ENCODE measurements at regions of chr17 and their contacts with region 1.

Region 1: GRCh38 chr17:42997984-42998938 is at the start of gene RPL27:
- DNase-seq: peak; percentile 99
- ATAC-seq: peak; percentile 97
- H3K4me3 Mint-ChIP-seq: peak within 1 kb of the TSS; percentile 96
- H3K27ac Mint-ChIP-seq: peak within 1 kb of the TSS; percentile 99
- H3K4me1 Mint-ChIP-seq: peaks cover 25% of the 10 kb centered on the region
- H3K27me3 Mint-ChIP-seq: no peaks in the 10 kb centered on the region
- CTCF ChIP-seq: peak; percentile 85
- total RNA-seq, gene RPL27: 1,640 to 1,647 TPM

Region 2: DNA sequence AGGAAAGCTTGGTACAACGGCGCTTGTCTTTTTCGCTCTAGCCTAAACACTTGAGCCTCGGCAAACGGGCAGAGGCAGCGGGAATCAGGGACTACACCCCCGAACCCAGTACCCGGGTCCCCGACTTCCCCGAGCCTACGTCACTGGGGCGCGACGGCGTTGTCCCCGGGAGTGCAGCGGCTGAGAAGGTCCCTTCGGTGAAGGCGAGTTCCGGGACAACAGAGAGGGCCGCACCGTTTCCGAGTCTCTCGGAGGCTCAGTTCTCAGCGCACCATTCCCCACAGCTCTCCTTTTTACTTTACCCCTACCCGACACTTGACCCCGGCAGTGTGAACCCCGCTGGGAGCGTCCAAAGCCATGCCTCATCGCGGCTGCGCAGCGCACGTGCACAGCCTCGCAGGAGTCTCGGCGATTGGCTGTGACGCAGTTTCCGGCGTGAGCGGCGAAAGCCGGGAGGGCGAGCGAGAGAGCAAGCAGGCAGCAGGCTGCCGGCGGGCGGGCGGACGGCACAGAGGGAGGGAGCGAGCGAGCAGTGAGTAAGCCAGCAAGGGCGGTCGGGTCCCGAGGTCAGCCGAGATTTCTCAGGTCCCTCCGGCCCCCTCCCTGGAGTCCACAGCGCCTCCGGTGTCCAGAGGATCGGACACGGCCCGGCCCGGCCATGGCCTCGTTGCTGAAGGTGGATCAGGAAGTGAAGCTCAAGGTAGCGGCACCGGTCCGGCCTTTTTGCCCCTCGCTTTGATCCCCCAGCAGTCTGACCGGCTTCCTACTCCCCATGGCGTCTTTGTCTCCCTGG is 165.1 kb before region 1 on chr17 and contains the start of gene PSME3:
- CTCF ChIA-PET with region 1: interaction called, 10 read pairs
- POLR2A ChIA-PET with region 1: interaction called, 9 read pairs
- intact Hi-C with region 1: no loop called
- DNase-seq: peak; percentile 92
- ATAC-seq: peak; percentile 89
- H3K4me3 Mint-ChIP-seq: peak within 1 kb of the TSS; percentile 94
- H3K27ac Mint-ChIP-seq: peak within 1 kb of the TSS; percentile 99
- H3K4me1 Mint-ChIP-seq: peaks cover 19% of the 10 kb centered on the region
- H3K27me3 Mint-ChIP-seq: no peaks in the 10 kb centered on the region
- CTCF ChIP-seq: no peak
- total RNA-seq, gene PSME3: 124 to 132 TPM

Region 3: DNA sequence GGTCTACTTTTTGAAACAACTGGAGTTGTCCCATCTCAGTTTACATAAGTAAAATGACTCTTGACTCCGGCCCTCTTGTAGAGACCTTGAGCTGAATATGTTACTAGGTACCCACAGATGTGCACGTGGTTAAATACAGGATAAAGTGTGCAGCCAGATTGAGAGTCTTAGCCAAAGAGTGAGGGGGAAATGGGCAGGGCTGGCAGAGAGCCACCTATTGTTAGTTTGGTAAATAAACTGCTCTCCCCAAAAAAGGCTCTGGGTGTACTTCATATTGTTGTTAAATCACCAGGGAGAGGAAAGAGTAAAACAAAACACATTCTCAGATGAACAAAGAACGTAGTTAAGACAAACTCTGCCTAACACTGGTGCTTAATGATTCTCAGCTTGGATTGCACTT is 77.3 kb before region 1 on chr17:
- CTCF ChIA-PET with region 1: no interaction called
- POLR2A ChIA-PET with region 1: no interaction called
- intact Hi-C with region 1: no loop called
- DNase-seq: no peak
- ATAC-seq: no peak
- H3K4me3 Mint-ChIP-seq: no peak overlapping the region
- H3K27ac Mint-ChIP-seq: no peak overlapping the region
- H3K4me1 Mint-ChIP-seq: no peaks in the 10 kb centered on the region
- H3K27me3 Mint-ChIP-seq: peaks cover 4% of the 10 kb centered on the region
- CTCF ChIP-seq: no peak

Region 4: GRCh38 chr17:42964161-42964932 is 33.9 kb before region 1 on chr17 and contains the start of gene AARSD1:
- CTCF ChIA-PET with region 1: interaction called, 4 read pairs
- POLR2A ChIA-PET with region 1: interaction called, 13 read pairs
- intact Hi-C with region 1: no loop called
- DNase-seq: peak; percentile 95
- ATAC-seq: peak; percentile 98
- H3K4me3 Mint-ChIP-seq: peak within 1 kb of the TSS; percentile 88
- H3K27ac Mint-ChIP-seq: peak within 1 kb of the TSS; percentile 95
- H3K4me1 Mint-ChIP-seq: peaks cover 17% of the 10 kb centered on the region
- H3K27me3 Mint-ChIP-seq: no peaks in the 10 kb centered on the region
- CTCF ChIP-seq: no peak
- total RNA-seq, gene AARSD1: 54.3 to 57.5 TPM

Region 5: DNA sequence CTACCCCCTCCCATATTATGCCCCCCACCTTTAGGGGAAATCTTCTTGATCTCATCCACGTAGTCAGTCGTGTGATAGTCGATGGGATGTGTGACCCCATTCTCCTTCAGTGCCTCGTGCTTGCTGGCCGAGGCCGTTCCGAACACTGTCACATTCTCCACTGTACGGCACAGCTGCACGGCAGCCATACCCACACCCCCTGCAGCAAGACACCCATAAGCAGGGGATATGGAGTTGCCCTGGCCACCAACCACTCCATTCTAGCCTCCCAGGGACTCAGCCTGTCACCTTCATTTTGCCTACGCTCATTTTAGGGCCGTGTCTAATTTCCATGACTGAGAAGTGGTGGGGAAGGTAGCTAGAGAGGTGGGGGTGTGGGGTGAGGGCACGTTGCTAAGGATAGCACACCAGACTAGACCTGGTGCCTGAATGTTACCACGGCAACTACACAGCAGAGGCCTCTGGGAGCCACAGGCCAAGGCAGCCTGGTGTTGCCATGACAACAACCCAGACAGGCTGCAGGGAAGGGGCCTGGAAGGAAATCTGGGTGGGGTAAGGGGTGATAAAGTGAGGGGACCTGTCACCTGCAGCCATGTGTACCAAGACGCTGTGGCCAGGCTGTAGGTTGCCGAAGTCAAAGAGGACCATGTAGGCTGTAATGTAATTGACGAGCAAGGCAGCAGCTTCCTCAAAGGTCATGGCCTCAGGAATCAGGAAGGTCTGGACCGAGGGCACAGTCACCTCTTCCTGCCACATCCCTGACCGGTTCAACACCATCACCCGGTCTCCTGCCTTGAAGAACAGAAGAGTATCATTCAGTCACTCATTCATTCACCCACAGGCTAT is 20.0 kb after region 1 on chr17:
- CTCF ChIA-PET with region 1: interaction called, 5 read pairs
- POLR2A ChIA-PET with region 1: interaction called, 36 read pairs
- intact Hi-C with region 1: no loop called
- DNase-seq: no peak
- ATAC-seq: peak; percentile 15
- H3K4me3 Mint-ChIP-seq: no peak overlapping the region
- H3K27ac Mint-ChIP-seq: no peak overlapping the region
- H3K4me1 Mint-ChIP-seq: peaks cover 31% of the 10 kb centered on the region
- H3K27me3 Mint-ChIP-seq: no peaks in the 10 kb centered on the region
- CTCF ChIP-seq: no peak

Region 6: GRCh38 chr17:43360739-43361505 is 362.7 kb after region 1 on chr17:
- CTCF ChIA-PET with region 1: no interaction called
- POLR2A ChIA-PET with region 1: interaction called, 11 read pairs
- intact Hi-C with region 1: no loop called
- DNase-seq: peak; percentile 97
- ATAC-seq: peak; percentile 86
- H3K4me3 Mint-ChIP-seq: peak overlapping the region; percentile 83
- H3K27ac Mint-ChIP-seq: peak overlapping the region; percentile 99
- H3K4me1 Mint-ChIP-seq: peaks cover 43% of the 10 kb centered on the region
- H3K27me3 Mint-ChIP-seq: peaks cover 4% of the 10 kb centered on the region
- CTCF ChIP-seq: no peak

Measured in activated CD8-positive, alpha-beta T cell treated with anti-CD3 and anti-CD28 coated beads for 36 hours (primary cell).